PC-9 (cell line): ENCODE measurements at regions of chr13 and their contacts with region 1.

Region 1: GRCh38 chr13:110444226-110444653 is 117.3 kb downstream of the RAB20 start:
- DNase-seq: peak; percentile 29 to 65
- H3K4me3 ChIP-seq: no peak overlapping the region
- H3K27ac ChIP-seq: no peak overlapping the region
- H3K4me1 ChIP-seq: peaks cover 77% of the 10 kb centered on the region
- H3K27me3 ChIP-seq: no peaks in the 10 kb centered on the region
- CTCF ChIP-seq: peak; percentile 45; the same call in 1 of the 2 replicates

Region 2: GRCh38 chr13:108961542-108962125 is 1482.6 kb before region 1 on chr13:
- CTCF ChIA-PET with region 1: no interaction called
- POLR2A ChIA-PET with region 1: no interaction called
- intact Hi-C with region 1: loop called (anchors 10 kb)
- DNase-seq: peak in 1 of 2 experiments; percentile 63
- H3K4me3 ChIP-seq: no peak overlapping the region
- H3K27ac ChIP-seq: peak overlapping the region; percentile 25
- H3K4me1 ChIP-seq: peaks cover 46% of the 10 kb centered on the region
- H3K27me3 ChIP-seq: no peaks in the 10 kb centered on the region
- CTCF ChIP-seq: peak; percentile 98

Region 3: DNA sequence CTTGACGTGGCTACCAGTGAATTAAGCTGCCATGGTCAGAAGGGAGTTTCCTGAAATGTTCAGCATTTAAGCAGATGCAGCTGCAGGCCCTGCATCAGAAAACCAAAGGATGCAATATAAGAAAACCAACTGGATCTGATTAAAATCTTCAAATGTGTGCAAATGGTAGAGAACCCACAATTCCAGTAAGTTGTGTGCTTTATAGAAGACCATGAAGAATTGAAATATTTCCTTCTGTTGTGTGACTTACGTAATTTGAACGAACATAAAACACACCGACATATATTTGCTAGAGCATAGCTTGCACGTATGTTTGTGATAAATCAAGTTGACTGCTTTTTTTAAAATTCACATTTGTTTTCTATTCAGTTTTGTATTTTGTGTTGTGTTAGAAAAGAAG is 328.6 kb before region 1 on chr13:
- CTCF ChIA-PET with region 1: interaction called, 10 read pairs
- POLR2A ChIA-PET with region 1: no interaction called
- intact Hi-C with region 1: no loop called
- DNase-seq: no peak
- H3K4me3 ChIP-seq: no peak overlapping the region
- H3K27ac ChIP-seq: no peak overlapping the region
- H3K4me1 ChIP-seq: peaks cover 46% of the 10 kb centered on the region
- H3K27me3 ChIP-seq: no peaks in the 10 kb centered on the region
- CTCF ChIP-seq: no peak

Region 4: DNA sequence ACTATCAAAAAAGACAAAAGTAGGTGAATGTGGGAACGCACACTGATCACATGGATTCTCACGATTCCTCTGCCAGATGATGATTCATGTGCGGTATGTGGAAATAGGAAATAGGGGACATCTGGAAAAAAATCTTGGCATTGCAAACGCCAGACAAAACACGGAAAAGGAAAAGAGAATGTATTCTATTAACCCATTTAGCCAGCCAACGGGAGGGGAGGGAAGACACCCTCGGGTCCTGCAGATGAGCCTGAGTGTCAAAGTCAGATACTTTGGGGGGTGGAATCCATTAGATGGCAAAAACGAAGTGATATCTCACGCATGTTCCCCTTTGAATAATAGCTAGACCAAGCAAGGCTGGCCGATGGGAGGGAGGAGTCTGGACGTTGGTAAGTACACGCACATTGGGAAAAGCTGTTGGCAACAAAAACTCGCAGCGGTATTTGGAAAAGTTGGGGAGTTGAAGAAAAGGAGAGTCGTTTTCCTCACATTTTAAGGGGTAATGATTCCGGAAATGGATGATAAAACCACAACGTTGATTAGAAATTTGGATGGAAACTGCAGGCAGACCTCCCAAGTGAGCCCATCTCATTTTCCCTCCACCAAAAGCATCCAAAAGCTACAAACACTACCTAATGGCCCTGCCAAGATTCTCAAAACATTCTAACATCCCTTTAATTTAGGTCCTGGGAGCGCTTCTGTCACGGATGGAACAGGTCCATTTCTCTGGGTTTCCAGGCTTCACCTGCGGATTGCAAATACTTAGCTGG is 210.9 kb before region 1 on chr13:
- CTCF ChIA-PET with region 1: no interaction called
- POLR2A ChIA-PET with region 1: no interaction called
- intact Hi-C with region 1: no loop called
- DNase-seq: no peak
- H3K4me3 ChIP-seq: no peak overlapping the region
- H3K27ac ChIP-seq: no peak overlapping the region
- H3K4me1 ChIP-seq: peaks cover 7% of the 10 kb centered on the region; the same call in 1 of the 2 replicates
- H3K27me3 ChIP-seq: no peaks in the 10 kb centered on the region
- CTCF ChIP-seq: no peak

Region 5: GRCh38 chr13:110347535-110348308 is 96.5 kb before region 1 on chr13:
- CTCF ChIA-PET with region 1: interaction called, 3 read pairs
- POLR2A ChIA-PET with region 1: no interaction called
- intact Hi-C with region 1: loop called (anchors 1 kb)
- DNase-seq: peak; percentile 84 to 98
- H3K4me3 ChIP-seq: peak overlapping the region; percentile 9; the same call in 1 of the 2 replicates
- H3K27ac ChIP-seq: peak overlapping the region; percentile 83
- H3K4me1 ChIP-seq: peaks cover 63% of the 10 kb centered on the region
- H3K27me3 ChIP-seq: no peaks in the 10 kb centered on the region
- CTCF ChIP-seq: no peak

Region 6: GRCh38 chr13:110525328-110526319 is 81.4 kb after region 1 on chr13:
- CTCF ChIA-PET with region 1: no interaction called
- POLR2A ChIA-PET with region 1: interaction called, 4 read pairs
- intact Hi-C with region 1: loop called (anchors 1 kb)
- DNase-seq: peak; percentile 72 to 90
- H3K4me3 ChIP-seq: no peak overlapping the region
- H3K27ac ChIP-seq: peak overlapping the region; percentile 71
- H3K4me1 ChIP-seq: peaks cover 79% of the 10 kb centered on the region
- H3K27me3 ChIP-seq: no peaks in the 10 kb centered on the region
- CTCF ChIP-seq: no peak